ENCODE measurements at regions of chr3 and their contacts with region 1.

Region 1: GRCh38 chr3:72938471-72939265 is 50.8 kb downstream of the GXYLT2 start:
- DNase-seq: no peak
- H3K4me3 ChIP-seq: no peak overlapping the region
- H3K27ac ChIP-seq: no peak overlapping the region
- H3K4me1 ChIP-seq: peaks cover 0 to 15% (median 2%) of the 10 kb centered on the region in 6 donors
- H3K27me3 ChIP-seq: peaks cover 0 to 7% (median 0%) of the 10 kb centered on the region in 7 donors
- CTCF ChIP-seq: peak in 10 of 11 experiments; percentile 43 to 77 (median 66)
- POLR2A ChIP-seq: no peak

Region 2: DNA sequence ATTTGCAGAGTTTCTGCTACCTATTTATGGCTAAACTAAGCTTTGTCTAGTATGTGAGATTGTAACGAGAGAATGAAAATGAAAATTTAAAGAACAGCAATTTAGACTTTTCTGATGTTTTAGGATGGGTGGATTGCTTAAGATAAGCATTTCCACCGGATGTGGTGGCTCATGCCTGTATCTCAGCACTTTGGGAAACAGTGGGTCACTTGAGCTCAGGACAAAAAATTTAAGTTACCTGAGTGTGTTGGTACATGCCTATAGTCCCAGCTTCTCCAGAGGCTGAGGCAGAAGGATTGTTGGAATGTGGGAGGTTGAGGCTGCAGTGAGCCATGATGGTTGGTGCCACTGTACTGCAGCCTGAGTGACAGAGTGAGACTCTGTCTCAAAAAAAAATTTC is 61.3 kb after region 1 on chr3:
- intact Hi-C with region 1: loop called (anchors 10 kb)
- DNase-seq: no peak
- H3K4me3 ChIP-seq: peak overlapping the region in 3 of 8 donors; percentile 79 to 97 (median 87)
- H3K27ac ChIP-seq: peak overlapping the region in 3 of 8 donors; percentile 0 to 99 (median 17)
- H3K4me1 ChIP-seq: peaks cover 33 to 82% (median 67%) of the 10 kb centered on the region in 6 donors
- H3K27me3 ChIP-seq: no peaks in the 10 kb centered on the region
- CTCF ChIP-seq: no peak
- POLR2A ChIP-seq: no peak

Region 3: DNA sequence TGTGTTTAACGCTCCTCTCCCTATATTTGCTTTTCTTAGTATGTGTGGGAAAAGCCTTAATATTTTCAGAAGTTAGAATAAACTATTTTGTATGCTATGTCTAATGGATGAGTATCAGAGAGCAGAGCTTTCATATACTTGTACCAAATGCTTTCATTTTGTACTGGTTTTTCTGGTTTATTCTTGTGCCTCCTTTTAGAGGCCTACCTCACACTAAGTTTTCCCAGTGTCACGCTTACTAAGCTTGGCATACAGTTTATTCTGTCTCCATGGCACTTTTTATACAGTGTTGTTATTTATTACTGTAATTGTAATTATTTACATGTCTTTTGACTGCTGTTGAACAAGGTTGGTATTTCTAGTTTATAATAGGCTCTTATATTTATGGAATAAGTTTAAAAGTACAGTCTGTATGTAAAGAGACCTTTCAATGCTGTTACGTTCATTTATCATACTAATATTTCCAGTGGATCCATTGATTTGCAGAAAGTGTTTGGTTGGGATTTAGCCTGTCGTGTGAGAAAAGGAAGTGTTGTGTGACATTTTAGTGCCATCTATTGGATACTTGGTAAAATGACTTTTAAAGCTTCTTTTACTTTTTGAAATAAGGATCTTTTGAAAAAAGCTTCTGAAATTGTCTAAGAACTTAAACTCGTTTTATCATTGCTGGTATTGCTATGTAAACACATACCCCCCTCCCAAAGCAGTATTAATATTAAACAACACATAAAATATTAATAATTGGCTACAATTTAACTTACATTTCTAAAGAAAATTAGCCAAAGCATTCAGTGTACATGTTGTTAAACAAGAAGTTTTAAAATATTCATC is 117.6 kb after region 1 on chr3:
- intact Hi-C with region 1: loop called (anchors 5 kb)
- DNase-seq: no peak
- H3K4me3 ChIP-seq: no peak overlapping the region
- H3K27ac ChIP-seq: peak overlapping the region in 1 of 8 donors; percentile 32
- H3K4me1 ChIP-seq: peaks cover 0 to 44% (median 14%) of the 10 kb centered on the region in 6 donors
- H3K27me3 ChIP-seq: no peaks in the 10 kb centered on the region
- CTCF ChIP-seq: peak in 10 of 11 experiments; percentile 11 to 50 (median 44)
- POLR2A ChIP-seq: no peak

Region 4: GRCh38 chr3:73086071-73086494 is 147.4 kb after region 1 on chr3:
- intact Hi-C with region 1: loop called (anchors 10 kb)
- DNase-seq: peak; percentile 81
- H3K4me3 ChIP-seq: no peak overlapping the region
- H3K27ac ChIP-seq: no peak overlapping the region
- H3K4me1 ChIP-seq: peaks cover 0 to 10% (median 4%) of the 10 kb centered on the region in 6 donors
- H3K27me3 ChIP-seq: no peaks in the 10 kb centered on the region
- CTCF ChIP-seq: peak; percentile 39 to 80 (median 72)
- POLR2A ChIP-seq: no peak

Measured in spleen (tissue), 13 donors.